CD4-positive, alpha-beta T cell (primary cell): ENCODE measurements at regions of chr5 and their contacts with region 1.

Region 1: DNA sequence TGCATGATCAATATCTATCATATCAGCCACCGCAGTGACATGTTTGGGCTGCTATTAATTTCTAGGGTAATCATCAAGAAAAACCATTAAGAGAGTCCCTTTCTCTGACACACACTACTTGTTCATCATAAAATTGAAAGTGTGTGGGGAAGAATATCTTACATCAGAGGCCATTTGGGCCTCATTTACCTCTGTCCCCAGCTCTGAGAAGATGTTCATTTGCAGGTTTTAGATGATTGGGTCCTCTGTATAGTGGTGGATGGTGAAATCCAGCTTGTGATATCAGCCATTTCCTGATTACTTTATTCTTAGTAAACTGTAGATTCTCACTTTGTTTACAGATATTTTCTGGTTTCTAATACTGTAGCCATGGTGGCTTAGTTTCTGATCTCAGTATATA is 29.8 kb upstream of the PJA2 start:
- DNase-seq: no peak
- ATAC-seq: no peak
- H3K4me3 ChIP-seq: no peak overlapping the region
- H3K4me3 Mint-ChIP-seq: no peak overlapping the region
- H3K27ac ChIP-seq: no peak overlapping the region
- H3K27ac Mint-ChIP-seq: no peak overlapping the region
- H3K4me1 ChIP-seq: no peaks in the 10 kb centered on the region
- H3K4me1 Mint-ChIP-seq: no peaks in the 10 kb centered on the region
- H3K27me3 ChIP-seq: no peaks in the 10 kb centered on the region
- H3K27me3 Mint-ChIP-seq: no peaks in the 10 kb centered on the region
- CTCF ChIP-seq: no peak

Region 2: GRCh38 chr5:108521841-108522506 is 917.6 kb before region 1 on chr5:
- CTCF ChIA-PET with region 1: no interaction called
- POLR2A ChIA-PET with region 1: no interaction called
- intact Hi-C with region 1: loop called (anchors 2 to 5 kb)
- DNase-seq: peak in 3 of 14 experiments; percentile 45 to 53 (median 47)
- ATAC-seq: no peak
- H3K4me3 ChIP-seq: no peak overlapping the region
- H3K4me3 Mint-ChIP-seq: no peak overlapping the region
- H3K27ac ChIP-seq: no peak overlapping the region
- H3K27ac Mint-ChIP-seq: no peak overlapping the region
- H3K4me1 ChIP-seq: no peaks in the 10 kb centered on the region
- H3K4me1 Mint-ChIP-seq: no peaks in the 10 kb centered on the region
- H3K27me3 ChIP-seq: peaks cover 0 to 4% of the 10 kb centered on the region in 2 experiments
- H3K27me3 Mint-ChIP-seq: peaks cover 26% of the 10 kb centered on the region
- CTCF ChIP-seq: peak; percentile 50

Region 3: DNA sequence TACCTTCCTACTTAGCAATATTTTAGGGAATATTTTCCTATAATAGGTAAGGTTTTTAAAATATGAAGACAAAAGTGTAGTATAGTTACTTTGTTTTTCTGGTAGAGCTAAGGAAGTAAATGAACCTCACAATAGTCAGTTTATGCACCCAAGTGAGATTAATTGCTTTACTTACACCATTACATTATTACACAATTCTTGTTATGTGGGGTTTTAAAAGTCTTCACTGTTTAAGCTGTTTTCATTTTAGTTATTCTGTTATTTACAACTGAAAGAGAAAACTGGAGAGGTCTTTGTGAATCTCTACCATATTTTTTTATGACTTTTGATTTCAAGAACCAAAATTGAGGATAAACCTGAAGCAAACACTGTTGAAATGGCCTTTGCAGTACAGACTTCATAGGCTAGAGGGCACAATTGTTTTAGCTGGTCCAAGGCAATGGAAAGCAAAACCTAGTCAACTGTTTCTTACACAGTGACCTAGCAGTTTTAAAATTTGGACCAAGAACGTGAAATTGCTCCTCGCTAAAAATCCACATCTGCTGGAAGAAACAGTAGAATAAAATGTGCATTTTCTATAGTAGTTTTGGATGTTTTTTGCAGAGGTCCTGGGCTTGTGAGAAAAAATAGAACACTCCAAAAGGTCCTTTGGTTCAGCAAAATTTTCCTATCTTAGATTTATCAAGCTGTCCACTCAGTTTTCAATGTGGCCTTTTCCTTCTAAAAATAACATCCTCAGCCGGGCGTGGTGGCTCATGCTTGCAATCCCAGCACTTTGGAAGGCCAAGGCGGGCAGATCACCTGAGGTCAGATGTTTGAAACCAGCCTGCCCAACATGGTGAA is 758.3 kb before region 1 on chr5:
- CTCF ChIA-PET with region 1: interaction called, 3 read pairs
- POLR2A ChIA-PET with region 1: no interaction called
- intact Hi-C with region 1: loop called in 1 of 2 experiments (anchors 1 kb)
- DNase-seq: peak in 6 of 14 experiments; percentile 2 to 68 (median 38)
- ATAC-seq: peak; percentile 68
- H3K4me3 ChIP-seq: no peak overlapping the region
- H3K4me3 Mint-ChIP-seq: no peak overlapping the region
- H3K27ac ChIP-seq: no peak overlapping the region
- H3K27ac Mint-ChIP-seq: no peak overlapping the region
- H3K4me1 ChIP-seq: no peaks in the 10 kb centered on the region
- H3K4me1 Mint-ChIP-seq: no peaks in the 10 kb centered on the region
- H3K27me3 ChIP-seq: no peaks in the 10 kb centered on the region
- H3K27me3 Mint-ChIP-seq: peaks cover 5% of the 10 kb centered on the region
- CTCF ChIP-seq: peak; percentile 59

Region 4: GRCh38 chr5:109186759-109187158 is 252.8 kb before region 1 on chr5:
- CTCF ChIA-PET with region 1: no interaction called
- POLR2A ChIA-PET with region 1: no interaction called
- intact Hi-C with region 1: loop called in 1 of 2 experiments (anchors 10 kb)
- DNase-seq: no peak
- ATAC-seq: no peak
- H3K4me3 ChIP-seq: no peak overlapping the region
- H3K4me3 Mint-ChIP-seq: no peak overlapping the region
- H3K27ac ChIP-seq: no peak overlapping the region
- H3K27ac Mint-ChIP-seq: no peak overlapping the region
- H3K4me1 ChIP-seq: no peaks in the 10 kb centered on the region
- H3K4me1 Mint-ChIP-seq: peaks cover 4% of the 10 kb centered on the region
- H3K27me3 ChIP-seq: no peaks in the 10 kb centered on the region
- H3K27me3 Mint-ChIP-seq: no peaks in the 10 kb centered on the region
- CTCF ChIP-seq: no peak

Region 5: GRCh38 chr5:109409844-109410388 is 29.7 kb before region 1 on chr5 and contains the start of gene PJA2:
- CTCF ChIA-PET with region 1: no interaction called
- POLR2A ChIA-PET with region 1: interaction called, 4 read pairs
- intact Hi-C with region 1: loop called in 1 of 2 experiments (anchors 2 kb)
- DNase-seq: peak; percentile 91 to 99 (median 96)
- ATAC-seq: peak; percentile 75
- H3K4me3 ChIP-seq: peak within 1 kb of the TSS; percentile 92
- H3K4me3 Mint-ChIP-seq: peak within 1 kb of the TSS; percentile 100
- H3K27ac ChIP-seq: peak within 1 kb of the TSS; percentile 98 to 99
- H3K27ac Mint-ChIP-seq: peak within 1 kb of the TSS; percentile 99
- H3K4me1 ChIP-seq: peaks cover 10% of the 10 kb centered on the region
- H3K4me1 Mint-ChIP-seq: peaks cover 52% of the 10 kb centered on the region
- H3K27me3 ChIP-seq: no peaks in the 10 kb centered on the region
- H3K27me3 Mint-ChIP-seq: no peaks in the 10 kb centered on the region
- CTCF ChIP-seq: no peak
- total RNA-seq, gene PJA2: 88.8 to 92.9 TPM

Region 6: GRCh38 chr5:109455598-109456096 is 16.1 kb after region 1 on chr5:
- CTCF ChIA-PET with region 1: no interaction called
- POLR2A ChIA-PET with region 1: no interaction called
- intact Hi-C with region 1: no loop called
- DNase-seq: no peak
- ATAC-seq: no peak
- H3K4me3 ChIP-seq: no peak overlapping the region
- H3K4me3 Mint-ChIP-seq: no peak overlapping the region
- H3K27ac ChIP-seq: no peak overlapping the region
- H3K27ac Mint-ChIP-seq: no peak overlapping the region
- H3K4me1 ChIP-seq: no peaks in the 10 kb centered on the region
- H3K4me1 Mint-ChIP-seq: no peaks in the 10 kb centered on the region
- H3K27me3 ChIP-seq: peaks cover 0 to 2% of the 10 kb centered on the region in 2 experiments
- H3K27me3 Mint-ChIP-seq: peaks cover 12% of the 10 kb centered on the region
- CTCF ChIP-seq: no peak